ENCODE measurements at regions of chr9 and their contacts with region 1.

Region 1: GRCh38 chr9:112074250-112075008 is 100.7 kb downstream of the SUSD1 start:
- DNase-seq: peak; percentile 23 to 77
- ATAC-seq: peak; percentile 83 to 92 (median 88)
- H3K4me3 ChIP-seq: peak overlapping the region in 2 of 10 donors; percentile 6
- H3K27ac ChIP-seq: peak overlapping the region in 9 of 10 donors; percentile 48 to 95 (median 72)
- H3K4me1 ChIP-seq: peaks cover 0 to 86% (median 29%) of the 10 kb centered on the region in 9 donors
- H3K27me3 ChIP-seq: no peaks in the 10 kb centered on the region
- CTCF ChIP-seq: peak; percentile 73 to 95 (median 91)

Region 2: DNA sequence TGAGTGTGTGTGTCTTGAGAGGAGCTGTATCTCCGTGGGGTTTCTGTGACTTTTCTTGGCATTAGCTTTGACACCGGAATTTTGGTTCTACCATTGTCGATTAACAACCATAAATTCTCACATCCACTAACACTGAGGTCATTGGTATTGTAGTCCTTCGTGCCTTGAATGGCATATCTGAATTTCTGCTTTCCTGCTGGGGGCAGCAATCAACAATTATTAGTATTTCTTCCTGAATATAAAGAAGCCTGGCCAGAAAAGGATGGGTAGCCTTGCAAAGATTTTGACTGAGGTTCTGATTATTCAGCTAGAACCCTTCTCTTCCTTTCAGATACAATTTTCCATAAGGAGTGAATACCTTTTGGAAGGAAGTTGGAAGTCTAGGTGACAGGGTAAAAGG is 246.2 kb before region 1 on chr9:
- intact Hi-C with region 1: loop called in 1 of 10 experiments (anchors 2 kb)
- DNase-seq: no peak
- ATAC-seq: no peak
- H3K4me3 ChIP-seq: no peak overlapping the region
- H3K27ac ChIP-seq: no peak overlapping the region
- H3K4me1 ChIP-seq: no peaks in the 10 kb centered on the region
- H3K27me3 ChIP-seq: no peaks in the 10 kb centered on the region
- CTCF ChIP-seq: peak in 5 of 9 donors; percentile 10 to 35 (median 22)

Region 3: DNA sequence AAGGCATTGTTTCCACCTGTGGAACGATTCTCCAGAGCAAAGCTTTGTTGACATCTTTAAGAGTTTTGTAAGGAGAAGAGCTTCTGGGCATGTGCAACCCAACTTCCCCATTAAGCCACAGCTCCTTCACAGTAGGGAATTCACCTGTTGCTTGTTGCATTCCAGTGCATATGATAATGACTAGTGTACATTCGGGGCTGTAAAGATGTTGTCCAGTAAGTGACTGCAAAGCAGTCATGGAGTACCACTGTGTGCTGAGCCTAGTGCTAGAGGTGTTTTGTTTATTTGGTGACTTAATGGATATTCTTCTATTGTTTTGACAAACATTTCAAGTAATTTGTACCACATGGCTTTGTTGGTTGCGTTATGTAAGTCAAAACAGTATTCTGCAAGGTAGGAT is 165.0 kb before region 1 on chr9:
- intact Hi-C with region 1: loop called in 1 of 10 experiments (anchors 10 kb)
- DNase-seq: no peak
- ATAC-seq: peak in 1 of 8 donors; percentile 42
- H3K4me3 ChIP-seq: no peak overlapping the region
- H3K27ac ChIP-seq: no peak overlapping the region
- H3K4me1 ChIP-seq: peaks cover 2 to 90% (median 27%) of the 10 kb centered on the region in 9 donors
- H3K27me3 ChIP-seq: no peaks in the 10 kb centered on the region
- CTCF ChIP-seq: no peak

Region 4: GRCh38 chr9:111965566-111966019 is 108.8 kb before region 1 on chr9:
- intact Hi-C with region 1: no loop called
- DNase-seq: no peak
- ATAC-seq: no peak
- H3K4me3 ChIP-seq: no peak overlapping the region
- H3K27ac ChIP-seq: no peak overlapping the region
- H3K4me1 ChIP-seq: peaks cover 0 to 9% (median 0%) of the 10 kb centered on the region in 9 donors
- H3K27me3 ChIP-seq: no peaks in the 10 kb centered on the region
- CTCF ChIP-seq: no peak

Region 5: DNA sequence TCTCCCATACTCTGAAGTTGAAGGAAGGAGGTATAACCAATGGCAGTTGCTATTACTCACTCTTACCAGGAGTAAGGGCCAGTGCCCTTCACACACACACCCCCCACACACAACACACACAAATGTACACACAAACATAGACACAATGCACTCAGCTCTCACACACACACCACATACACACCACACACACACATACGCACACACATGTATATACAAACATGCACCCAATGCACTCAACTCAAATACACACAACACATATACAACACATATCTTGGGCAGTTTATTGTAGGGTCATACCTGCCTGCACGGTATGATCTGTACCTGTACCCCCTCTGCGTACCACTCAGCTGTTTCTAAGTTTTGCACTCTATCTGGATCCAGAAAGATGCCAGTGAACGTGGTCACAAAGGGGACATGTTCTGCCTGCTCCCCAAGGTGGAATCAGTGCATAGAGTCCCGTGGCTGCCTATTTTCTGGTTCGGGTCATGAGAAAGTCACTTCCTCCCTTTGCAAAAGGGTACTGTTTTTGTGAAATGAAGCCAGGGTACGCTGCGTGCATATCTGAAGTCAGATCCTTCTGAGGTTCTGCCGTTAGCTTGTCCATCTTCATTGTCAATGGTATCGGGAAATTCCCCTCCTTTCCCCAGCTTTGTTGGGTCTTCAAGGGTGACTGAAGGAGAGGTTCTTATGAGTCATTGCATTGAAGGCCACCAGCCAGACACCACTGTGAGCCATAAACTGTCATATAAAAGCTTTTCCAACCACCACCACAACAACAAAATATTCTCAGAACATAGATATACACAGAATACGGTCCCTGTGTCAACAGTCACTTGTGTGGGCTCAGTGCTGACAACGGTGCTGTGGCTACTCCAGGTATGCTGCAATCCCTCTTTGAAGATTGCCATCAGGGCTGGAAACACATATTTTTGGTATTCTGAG is 45.9 kb before region 1 on chr9:
- intact Hi-C with region 1: no loop called
- DNase-seq: no peak
- ATAC-seq: no peak
- H3K4me3 ChIP-seq: no peak overlapping the region
- H3K27ac ChIP-seq: no peak overlapping the region
- H3K4me1 ChIP-seq: peaks cover 0 to 25% (median 0%) of the 10 kb centered on the region in 9 donors
- H3K27me3 ChIP-seq: no peaks in the 10 kb centered on the region
- CTCF ChIP-seq: no peak

Measured in heart right ventricle (tissue), 16 donors.